Calu3 (cell line): ENCODE measurements at regions of chr1 and their contacts with region 1.

Region 1: DNA sequence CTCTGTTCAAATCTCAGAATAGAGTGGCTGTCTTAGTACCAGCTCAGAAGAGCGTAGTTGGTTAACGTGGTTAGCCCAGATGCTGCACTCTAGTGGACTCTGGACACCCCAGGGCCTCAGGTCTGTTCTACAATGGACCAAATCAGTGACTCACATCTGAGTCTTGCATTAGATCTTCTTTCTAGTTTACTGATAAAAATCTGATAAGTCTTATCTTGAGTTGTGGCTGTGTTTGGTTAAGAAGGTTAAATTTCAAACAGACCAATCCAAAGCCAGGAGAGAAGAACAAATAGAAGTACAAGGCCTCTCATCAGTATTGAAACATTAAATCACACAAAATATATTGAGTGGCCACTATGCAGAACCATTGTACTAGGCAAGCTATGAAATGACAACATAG is 104.1 kb downstream of the NR5A2 start:
- DNase-seq: peak; percentile 59
- H3K4me3 Mint-ChIP-seq: no peak overlapping the region
- H3K27ac Mint-ChIP-seq: no peak overlapping the region
- H3K4me1 Mint-ChIP-seq: peaks cover 54% of the 10 kb centered on the region
- H3K27me3 Mint-ChIP-seq: no peaks in the 10 kb centered on the region
- CTCF ChIP-seq: no peak

Region 2: DNA sequence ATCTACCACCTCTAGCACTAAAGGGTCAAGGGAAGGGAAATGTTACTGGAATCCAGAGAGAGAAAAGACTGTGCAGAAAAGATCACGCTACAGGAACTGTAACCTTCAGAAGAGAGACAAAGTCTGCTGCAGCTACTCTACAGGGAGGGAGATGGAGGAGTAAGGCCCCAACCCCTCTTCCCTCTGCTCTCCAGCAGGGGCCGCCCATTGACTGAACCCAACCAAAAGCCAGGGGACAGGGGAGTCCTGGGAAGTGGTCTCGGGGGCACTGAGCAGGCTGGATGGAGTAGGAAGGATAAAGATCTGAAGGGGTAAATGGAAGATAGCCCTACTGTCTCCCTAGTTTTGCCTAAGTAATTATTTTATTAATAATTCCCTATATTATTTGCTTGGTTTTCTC is 176.9 kb before region 1 on chr1:
- CTCF ChIA-PET with region 1: no interaction called
- intact Hi-C with region 1: loop called (anchors 2 kb)
- DNase-seq: peak; percentile 64
- H3K4me3 Mint-ChIP-seq: no peak overlapping the region
- H3K27ac Mint-ChIP-seq: peak overlapping the region; percentile 22
- H3K4me1 Mint-ChIP-seq: peaks cover 23% of the 10 kb centered on the region
- H3K27me3 Mint-ChIP-seq: no peaks in the 10 kb centered on the region
- CTCF ChIP-seq: peak; percentile 69

Region 3: DNA sequence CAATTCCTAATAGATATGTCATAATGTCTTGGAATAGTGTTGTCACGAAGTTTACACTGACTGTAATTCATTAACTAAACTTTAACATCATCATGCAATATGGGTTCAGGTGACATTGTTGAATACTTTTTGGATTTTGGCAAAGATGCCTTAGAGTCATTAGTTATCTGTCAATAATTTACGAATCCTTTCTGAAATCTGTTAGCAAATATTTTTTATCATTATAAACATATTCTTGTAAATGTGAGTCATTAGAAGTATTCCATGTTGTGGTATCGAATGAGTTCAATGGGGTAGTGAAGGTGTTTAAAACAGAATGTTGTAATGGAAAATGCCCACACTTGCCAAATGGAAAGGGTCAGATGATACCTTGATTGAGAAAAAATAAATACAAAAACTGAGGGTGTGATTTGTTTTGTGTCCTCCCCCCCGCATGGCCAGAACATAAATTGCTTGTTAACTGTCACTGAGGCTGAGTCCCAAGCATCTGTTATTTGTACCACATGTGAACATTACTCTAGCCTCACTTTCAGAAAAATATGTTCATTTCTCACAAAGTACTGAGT is 109.3 kb before region 1 on chr1:
- CTCF ChIA-PET with region 1: no interaction called
- intact Hi-C with region 1: loop called (anchors 5 kb)
- DNase-seq: peak; percentile 35
- H3K4me3 Mint-ChIP-seq: no peak overlapping the region
- H3K27ac Mint-ChIP-seq: peak overlapping the region; percentile 97
- H3K4me1 Mint-ChIP-seq: peaks cover 43% of the 10 kb centered on the region
- H3K27me3 Mint-ChIP-seq: no peaks in the 10 kb centered on the region
- CTCF ChIP-seq: no peak

Region 4: DNA sequence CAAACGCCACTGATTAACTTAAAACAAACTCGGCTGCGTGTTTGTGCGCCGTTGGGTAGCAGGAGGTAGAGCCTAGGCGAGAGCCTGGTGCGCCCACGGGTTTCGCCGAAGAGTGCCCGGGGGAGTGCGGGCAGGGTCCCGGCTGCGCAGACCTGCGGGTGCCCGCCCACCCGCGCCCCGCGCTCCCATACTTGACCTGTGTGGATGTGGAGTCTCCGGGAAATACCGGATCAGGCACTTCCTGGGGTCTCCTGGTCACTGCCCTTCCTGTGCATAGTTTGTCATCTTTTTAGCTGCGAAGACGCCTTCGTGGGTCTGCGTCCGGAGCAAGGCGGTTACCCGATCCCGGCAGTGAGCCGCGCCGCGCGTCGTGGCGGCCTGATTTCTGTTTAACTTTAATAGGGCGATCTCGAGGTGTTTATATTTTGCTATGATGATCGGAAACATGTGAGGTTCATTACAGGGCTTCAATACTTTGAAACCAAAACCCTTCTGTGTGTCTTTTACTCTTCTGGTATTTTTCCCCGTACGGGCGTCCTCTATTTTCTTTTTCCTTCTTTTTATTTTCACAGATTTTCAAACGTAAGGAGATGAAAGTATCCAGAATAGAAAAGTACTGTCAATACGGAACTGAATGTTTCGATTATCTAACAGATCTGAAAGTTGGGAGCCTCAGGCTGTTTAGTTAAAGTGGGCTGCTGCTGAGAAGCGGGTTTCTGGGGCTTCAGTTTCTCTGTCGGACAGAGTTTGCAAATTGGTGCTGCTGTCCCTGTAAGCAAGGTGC is 88.9 kb before region 1 on chr1:
- CTCF ChIA-PET with region 1: interaction called, 3 read pairs
- intact Hi-C with region 1: loop called (anchors 2 kb)
- DNase-seq: peak; percentile 30
- H3K4me3 Mint-ChIP-seq: peak overlapping the region; percentile 83
- H3K27ac Mint-ChIP-seq: peak overlapping the region; percentile 47
- H3K4me1 Mint-ChIP-seq: peaks cover 35% of the 10 kb centered on the region
- H3K27me3 Mint-ChIP-seq: peaks cover 39% of the 10 kb centered on the region
- CTCF ChIP-seq: no peak

Region 5: DNA sequence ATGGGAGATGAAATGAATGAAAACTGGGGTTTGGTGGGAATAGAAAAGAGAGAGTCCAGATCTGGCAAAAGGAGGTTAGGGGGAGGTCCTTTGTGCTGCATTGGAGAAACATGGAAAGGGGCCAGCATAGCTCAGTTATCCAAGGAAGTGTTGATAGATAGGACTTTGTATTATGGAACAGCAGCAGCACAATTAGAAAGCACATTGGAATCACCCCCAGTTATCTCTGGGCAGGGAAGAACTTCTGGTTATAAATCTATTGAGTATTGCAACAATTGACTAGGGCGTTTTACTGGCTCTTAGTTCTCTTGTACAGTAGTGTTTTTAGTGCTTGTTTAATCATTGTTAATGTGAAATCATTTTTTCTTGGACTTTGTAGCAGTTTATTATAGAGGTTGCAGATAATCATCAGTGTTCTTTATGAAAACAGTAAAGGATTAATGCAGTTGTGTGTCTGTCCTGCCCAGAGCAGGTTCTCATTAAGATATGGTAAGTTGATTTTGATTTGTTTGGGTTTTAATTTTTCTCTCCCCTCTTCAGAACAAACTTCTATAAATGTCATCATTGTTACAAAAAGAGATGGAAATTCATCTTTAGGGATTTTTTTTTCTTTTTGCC is 27.5 kb before region 1 on chr1:
- CTCF ChIA-PET with region 1: no interaction called
- intact Hi-C with region 1: no loop called
- DNase-seq: no peak
- H3K4me3 Mint-ChIP-seq: no peak overlapping the region
- H3K27ac Mint-ChIP-seq: no peak overlapping the region
- H3K4me1 Mint-ChIP-seq: peaks cover 39% of the 10 kb centered on the region
- H3K27me3 Mint-ChIP-seq: no peaks in the 10 kb centered on the region
- CTCF ChIP-seq: no peak

Region 6: DNA sequence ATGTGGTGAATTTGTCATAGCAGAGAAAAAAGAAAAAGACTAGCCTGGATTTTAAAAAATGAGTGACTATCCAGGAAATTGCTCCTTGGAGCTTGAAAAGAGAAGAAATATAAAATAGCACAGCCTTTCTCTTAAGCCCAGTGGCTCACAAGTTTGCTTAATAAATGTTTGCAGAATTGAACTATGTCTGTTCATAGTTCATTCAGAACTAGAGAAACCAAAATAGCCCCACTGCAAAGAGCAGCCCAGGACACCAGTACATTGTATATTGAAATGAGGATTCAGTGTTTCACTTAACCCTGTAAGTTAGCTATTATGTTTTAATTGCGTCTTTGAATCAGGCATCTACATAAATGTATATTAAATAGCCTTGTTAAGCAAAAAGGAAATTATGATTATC is 15.3 kb before region 1 on chr1:
- CTCF ChIA-PET with region 1: interaction called, 6 read pairs
- intact Hi-C with region 1: loop called (anchors 2 kb)
- DNase-seq: no peak
- H3K4me3 Mint-ChIP-seq: no peak overlapping the region
- H3K27ac Mint-ChIP-seq: peak overlapping the region; percentile 88
- H3K4me1 Mint-ChIP-seq: peaks cover 63% of the 10 kb centered on the region
- H3K27me3 Mint-ChIP-seq: no peaks in the 10 kb centered on the region
- CTCF ChIP-seq: no peak

Region 7: DNA sequence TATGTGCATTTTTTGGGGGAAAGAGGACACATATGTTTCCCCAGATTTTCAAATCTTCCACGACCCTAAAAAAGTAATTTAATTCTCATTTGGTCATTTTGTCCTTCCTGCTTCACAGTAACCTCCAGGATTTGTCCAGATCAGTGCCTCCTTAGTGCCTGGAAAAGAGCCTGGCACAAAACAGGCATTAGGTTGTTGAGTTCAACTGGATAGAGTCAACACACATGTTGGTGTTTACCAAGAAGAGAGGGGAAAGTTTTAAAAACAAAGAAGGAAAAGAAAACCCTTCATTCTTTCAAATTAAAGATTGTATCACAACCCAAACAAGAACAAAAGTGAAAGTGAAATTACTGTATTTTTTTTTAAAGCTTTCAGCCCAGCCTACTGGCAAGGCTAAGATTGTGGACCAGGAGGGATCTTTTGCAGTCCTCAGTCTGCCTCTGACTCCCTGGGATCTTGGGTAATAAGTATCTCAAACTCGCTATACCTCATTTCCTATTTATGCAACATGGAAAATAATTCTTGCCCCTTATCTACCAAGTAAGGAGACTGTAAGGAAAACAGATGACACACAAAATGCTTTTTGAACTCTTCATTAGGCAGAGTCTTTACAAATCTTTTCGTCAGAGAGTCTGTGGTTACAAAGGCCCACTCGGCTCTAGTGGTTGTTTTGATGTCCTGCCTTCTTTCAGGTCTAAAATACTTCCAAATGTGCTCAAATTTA is 220.4 kb after region 1 on chr1:
- CTCF ChIA-PET with region 1: no interaction called
- intact Hi-C with region 1: no loop called
- DNase-seq: no peak
- H3K4me3 Mint-ChIP-seq: peak overlapping the region; percentile 7
- H3K27ac Mint-ChIP-seq: peak overlapping the region; percentile 35
- H3K4me1 Mint-ChIP-seq: peaks cover 13% of the 10 kb centered on the region
- H3K27me3 Mint-ChIP-seq: no peaks in the 10 kb centered on the region
- CTCF ChIP-seq: no peak